ENCODE measurements at regions of chr9 and their contacts with region 1.

Region 1: GRCh38 chr9:38068866-38069629 is at the start of gene SHB:
- DNase-seq: peak; percentile 88
- H3K4me3 ChIP-seq: peak within 1 kb of the TSS; percentile 86 to 99 (median 94)
- H3K27ac ChIP-seq: peak within 1 kb of the TSS; percentile 93 to 98 (median 98)
- H3K4me1 ChIP-seq: peaks cover 11 to 58% (median 42%) of the 10 kb centered on the region in 4 donors
- H3K27me3 ChIP-seq: no peaks in the 10 kb centered on the region
- CTCF ChIP-seq: peak in 3 of 5 experiments; percentile 36 to 71 (median 55)
- EP300 ChIP-seq: no peak
- POLR2A ChIP-seq: peak; percentile 60
- total RNA-seq, gene SHB: 11.9 to 33.7 (median 22.2) TPM

Region 2: DNA sequence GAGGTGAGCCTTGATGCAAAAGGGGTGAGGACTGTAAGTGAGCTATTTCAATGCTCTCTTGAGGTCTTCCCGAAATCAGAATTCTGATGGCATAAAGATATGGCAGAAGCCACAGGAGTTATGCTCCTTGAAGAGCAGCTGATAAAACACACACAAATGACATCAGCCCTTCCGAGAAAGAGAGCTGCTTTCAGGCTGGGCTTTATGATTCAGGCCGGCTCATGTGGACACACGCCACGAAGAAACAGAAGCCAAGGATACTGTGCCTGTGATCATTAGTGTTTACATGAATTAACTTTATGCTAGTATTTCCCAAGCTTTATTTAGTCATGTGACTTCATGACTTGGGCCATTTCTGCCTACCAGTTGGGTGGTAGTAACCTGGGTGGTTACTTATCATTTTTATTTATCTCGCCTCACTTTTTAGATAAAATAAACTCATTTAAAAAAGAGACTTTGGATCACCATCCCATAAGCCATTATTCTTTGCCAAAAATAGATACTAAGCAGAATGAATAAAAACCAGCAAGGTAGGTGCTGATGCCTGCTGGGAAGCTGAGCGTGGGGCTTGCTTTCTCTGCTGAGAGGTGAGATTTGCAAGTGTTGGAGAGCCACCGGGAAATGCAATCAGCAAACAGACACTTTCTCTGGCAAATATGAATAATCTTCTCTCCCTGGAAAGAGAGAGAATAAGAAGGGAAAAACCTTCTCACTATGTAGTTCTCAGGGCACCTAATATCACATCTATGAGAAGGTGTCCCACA is 92.2 kb before region 1 on chr9:
- in situ Hi-C with region 1: no loop called
- intact Hi-C with region 1: loop called (anchors 5 kb)
- DNase-seq: no peak
- H3K4me3 ChIP-seq: no peak overlapping the region
- H3K27ac ChIP-seq: peak overlapping the region; percentile 17 to 69 (median 40)
- H3K4me1 ChIP-seq: peaks cover 0 to 7% (median 5%) of the 10 kb centered on the region in 4 donors
- H3K27me3 ChIP-seq: no peaks in the 10 kb centered on the region
- CTCF ChIP-seq: no peak
- EP300 ChIP-seq: no peak
- POLR2A ChIP-seq: no peak

Region 3: GRCh38 chr9:38017149-38017884 is 51.7 kb before region 1 on chr9:
- in situ Hi-C with region 1: no loop called
- intact Hi-C with region 1: loop called (anchors 5 kb)
- DNase-seq: no peak
- H3K4me3 ChIP-seq: no peak overlapping the region
- H3K27ac ChIP-seq: peak overlapping the region; percentile 28 to 78 (median 56)
- H3K4me1 ChIP-seq: peaks cover 27 to 36% (median 31%) of the 10 kb centered on the region in 4 donors
- H3K27me3 ChIP-seq: no peaks in the 10 kb centered on the region
- CTCF ChIP-seq: no peak
- EP300 ChIP-seq: no peak
- POLR2A ChIP-seq: no peak

Region 4: DNA sequence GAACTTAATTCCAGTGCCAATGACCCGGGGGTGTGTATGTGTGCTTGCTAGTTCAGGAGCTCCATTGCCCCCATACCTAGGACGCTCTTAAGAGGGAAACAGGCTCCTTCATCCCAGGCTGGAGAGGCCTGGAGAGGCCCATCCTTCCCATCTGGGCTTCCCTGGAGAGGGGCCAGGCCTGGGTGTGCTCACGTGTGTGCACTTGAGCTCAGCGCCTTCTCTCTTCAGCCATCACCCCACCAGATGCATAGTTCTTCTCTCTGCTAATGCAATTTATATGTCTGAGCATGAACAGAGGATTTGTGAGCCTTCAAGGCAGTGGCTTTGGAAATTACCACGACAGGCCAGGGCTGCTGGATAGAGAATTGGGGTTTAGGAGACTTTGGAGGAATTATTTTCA is 48.6 kb after region 1 on chr9:
- in situ Hi-C with region 1: no loop called
- intact Hi-C with region 1: no loop called
- DNase-seq: no peak
- H3K4me3 ChIP-seq: no peak overlapping the region
- H3K27ac ChIP-seq: no peak overlapping the region
- H3K4me1 ChIP-seq: no peaks in the 10 kb centered on the region
- H3K27me3 ChIP-seq: no peaks in the 10 kb centered on the region
- CTCF ChIP-seq: no peak
- EP300 ChIP-seq: no peak
- POLR2A ChIP-seq: no peak

Region 5: GRCh38 chr9:38208206-38208901 is 139.3 kb after region 1 on chr9:
- in situ Hi-C with region 1: no loop called
- intact Hi-C with region 1: no loop called
- DNase-seq: no peak
- H3K4me3 ChIP-seq: no peak overlapping the region
- H3K27ac ChIP-seq: no peak overlapping the region
- H3K4me1 ChIP-seq: no peaks in the 10 kb centered on the region
- H3K27me3 ChIP-seq: no peaks in the 10 kb centered on the region
- CTCF ChIP-seq: no peak
- EP300 ChIP-seq: no peak
- POLR2A ChIP-seq: no peak

Region 6: DNA sequence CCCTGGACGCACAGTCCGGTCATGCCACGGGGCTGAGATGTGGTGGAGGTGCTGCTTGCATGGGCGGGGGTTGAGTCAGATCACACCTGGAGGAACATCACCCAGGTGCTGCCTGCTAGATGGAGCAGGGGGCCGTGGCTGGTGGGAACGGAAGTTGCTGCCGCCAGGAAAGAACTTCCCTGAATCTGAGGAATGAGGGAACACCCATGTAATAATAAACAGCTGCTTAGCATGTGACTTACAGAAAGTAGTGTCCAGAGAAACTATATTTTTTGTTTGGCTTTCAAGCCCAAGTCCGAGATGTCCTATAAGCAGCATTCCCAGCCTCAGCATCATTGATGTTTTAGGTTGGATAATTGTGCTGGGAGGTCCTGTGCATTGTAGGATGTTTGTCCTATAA is 678.0 kb after region 1 on chr9:
- in situ Hi-C with region 1: no loop called
- intact Hi-C with region 1: no loop called
- DNase-seq: no peak
- H3K4me3 ChIP-seq: no peak overlapping the region
- H3K27ac ChIP-seq: no peak overlapping the region
- H3K4me1 ChIP-seq: no peaks in the 10 kb centered on the region
- H3K27me3 ChIP-seq: no peaks in the 10 kb centered on the region
- CTCF ChIP-seq: no peak
- EP300 ChIP-seq: no peak
- POLR2A ChIP-seq: no peak

Measured in transverse colon (tissue), 4 donors.